Naive thymus-derived CD4-positive, alpha-beta T cell (primary cell): ENCODE measurements at regions of chr3 and their contacts with region 1.

Region 1: DNA sequence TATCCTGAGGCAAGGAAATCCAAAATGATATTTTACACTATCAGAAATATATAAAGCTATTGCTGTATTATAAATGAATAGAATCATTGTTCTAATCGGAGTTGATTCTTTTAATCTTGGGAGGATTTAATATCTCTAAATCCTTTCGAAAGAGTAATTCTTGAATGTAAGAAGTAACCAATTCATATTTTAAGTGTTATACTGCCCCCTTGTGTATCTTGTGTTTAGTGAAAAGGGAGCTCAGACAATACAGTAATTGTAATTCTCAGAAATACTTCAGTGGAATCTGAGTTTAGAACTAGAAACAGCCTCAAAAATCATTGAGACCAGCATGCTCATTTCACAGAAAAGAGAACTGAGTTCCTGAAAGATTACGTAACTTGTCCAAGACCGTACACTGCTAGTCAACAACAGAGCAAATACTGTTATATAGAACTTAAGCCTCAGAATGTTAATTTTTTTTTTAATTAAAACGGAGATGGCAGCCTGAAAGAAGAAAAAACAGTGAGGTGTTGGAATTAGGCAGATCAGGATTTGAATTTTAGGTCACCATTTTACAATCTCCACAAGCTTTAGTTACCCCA is 42.9 kb downstream of the PLCH1 start:
- DNase-seq: peak in 7 of 9 donors; percentile 13 to 58 (median 45)
- ATAC-seq: peak; percentile 69
- H3K4me3 ChIP-seq: no peak overlapping the region
- H3K4me3 Mint-ChIP-seq: no peak overlapping the region
- H3K27ac ChIP-seq: no peak overlapping the region
- H3K27ac Mint-ChIP-seq: no peak overlapping the region
- H3K4me1 ChIP-seq: no peaks in the 10 kb centered on the region
- H3K4me1 Mint-ChIP-seq: peaks cover 0 to 4% (median 0%) of the 10 kb centered on the region in 7 donors
- H3K27me3 ChIP-seq: no peaks in the 10 kb centered on the region
- H3K27me3 Mint-ChIP-seq: peaks cover 0 to 28% (median 6%) of the 10 kb centered on the region in 5 donors

Region 2: GRCh38 chr3:154040286-154040685 is 1661.7 kb before region 1 on chr3:
- CTCF ChIA-PET with region 1: no interaction called
- POLR2A ChIA-PET with region 1: no interaction called
- intact Hi-C with region 1: loop called in 1 of 2 experiments (anchors 2 kb)
- DNase-seq: no peak
- ATAC-seq: no peak
- H3K4me3 ChIP-seq: no peak overlapping the region
- H3K4me3 Mint-ChIP-seq: no peak overlapping the region
- H3K27ac ChIP-seq: no peak overlapping the region
- H3K27ac Mint-ChIP-seq: no peak overlapping the region
- H3K4me1 ChIP-seq: no peaks in the 10 kb centered on the region
- H3K4me1 Mint-ChIP-seq: no peaks in the 10 kb centered on the region
- H3K27me3 ChIP-seq: peaks cover 0 to 4% of the 10 kb centered on the region in 2 donors
- H3K27me3 Mint-ChIP-seq: peaks cover 2 to 22% (median 9%) of the 10 kb centered on the region in 5 donors

Region 3: DNA sequence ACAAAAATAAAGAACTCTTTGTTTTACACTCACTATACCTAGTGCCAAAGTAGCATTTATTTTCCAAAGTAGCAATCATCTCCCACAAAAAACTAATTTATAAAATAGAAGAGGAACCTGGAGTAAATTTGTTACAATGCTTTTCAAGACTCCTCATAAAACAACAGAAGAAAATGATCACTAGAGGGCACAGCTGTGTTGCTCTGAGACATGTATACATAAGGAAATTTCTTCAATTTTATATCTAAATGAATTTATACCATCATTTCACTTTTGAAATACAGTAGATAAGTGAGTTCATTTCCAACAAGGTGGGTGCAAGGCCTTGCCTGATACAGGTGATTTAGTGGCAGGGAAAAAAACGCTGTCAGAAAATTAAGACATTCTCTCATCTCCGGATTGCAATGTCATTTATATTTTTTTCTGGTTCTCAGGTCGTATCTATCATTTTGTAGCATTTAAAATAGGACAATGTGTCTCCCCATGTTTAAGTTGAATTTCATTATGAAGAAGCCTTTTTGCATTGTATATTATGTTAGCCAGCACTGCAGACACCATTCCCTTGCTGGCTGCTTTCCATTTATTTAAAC is 1606.0 kb before region 1 on chr3:
- CTCF ChIA-PET with region 1: no interaction called
- POLR2A ChIA-PET with region 1: no interaction called
- intact Hi-C with region 1: loop called in 1 of 2 experiments (anchors 2 kb)
- DNase-seq: no peak
- ATAC-seq: no peak
- H3K4me3 ChIP-seq: no peak overlapping the region
- H3K4me3 Mint-ChIP-seq: no peak overlapping the region
- H3K27ac ChIP-seq: no peak overlapping the region
- H3K27ac Mint-ChIP-seq: no peak overlapping the region
- H3K4me1 ChIP-seq: no peaks in the 10 kb centered on the region
- H3K4me1 Mint-ChIP-seq: no peaks in the 10 kb centered on the region
- H3K27me3 ChIP-seq: no peaks in the 10 kb centered on the region
- H3K27me3 Mint-ChIP-seq: peaks cover 0 to 12% (median 1%) of the 10 kb centered on the region in 5 donors

Region 4: DNA sequence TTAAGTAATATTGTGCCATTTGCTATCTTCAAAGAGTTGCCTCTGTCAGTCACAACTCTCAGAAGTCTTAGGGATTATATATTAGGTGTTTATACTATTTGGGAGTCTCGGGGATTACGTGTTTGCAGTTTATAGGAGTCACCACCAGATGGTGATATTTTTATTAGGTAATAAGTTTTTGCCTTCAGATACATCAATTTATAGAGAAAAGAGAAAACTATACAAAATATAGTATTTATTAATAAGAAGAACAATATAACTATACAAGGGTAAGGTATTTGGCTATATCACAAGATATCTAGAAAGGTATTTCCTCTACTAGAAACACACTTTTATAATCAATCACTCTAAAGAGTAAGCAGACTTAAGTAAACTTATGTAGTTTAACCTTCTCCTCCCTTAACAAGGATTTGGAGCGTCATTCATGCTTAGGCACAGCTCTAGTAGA is 1367.0 kb before region 1 on chr3:
- CTCF ChIA-PET with region 1: interaction called, 4 read pairs
- POLR2A ChIA-PET with region 1: no interaction called
- intact Hi-C with region 1: loop called (anchors 1 kb)
- DNase-seq: peak in 5 of 9 donors; percentile 22 to 35 (median 26)
- ATAC-seq: peak; percentile 70
- H3K4me3 ChIP-seq: no peak overlapping the region
- H3K4me3 Mint-ChIP-seq: no peak overlapping the region
- H3K27ac ChIP-seq: no peak overlapping the region
- H3K27ac Mint-ChIP-seq: no peak overlapping the region
- H3K4me1 ChIP-seq: no peaks in the 10 kb centered on the region
- H3K4me1 Mint-ChIP-seq: no peaks in the 10 kb centered on the region
- H3K27me3 ChIP-seq: no peaks in the 10 kb centered on the region
- H3K27me3 Mint-ChIP-seq: peaks cover 6 to 41% (median 7%) of the 10 kb centered on the region in 5 donors

Region 5: DNA sequence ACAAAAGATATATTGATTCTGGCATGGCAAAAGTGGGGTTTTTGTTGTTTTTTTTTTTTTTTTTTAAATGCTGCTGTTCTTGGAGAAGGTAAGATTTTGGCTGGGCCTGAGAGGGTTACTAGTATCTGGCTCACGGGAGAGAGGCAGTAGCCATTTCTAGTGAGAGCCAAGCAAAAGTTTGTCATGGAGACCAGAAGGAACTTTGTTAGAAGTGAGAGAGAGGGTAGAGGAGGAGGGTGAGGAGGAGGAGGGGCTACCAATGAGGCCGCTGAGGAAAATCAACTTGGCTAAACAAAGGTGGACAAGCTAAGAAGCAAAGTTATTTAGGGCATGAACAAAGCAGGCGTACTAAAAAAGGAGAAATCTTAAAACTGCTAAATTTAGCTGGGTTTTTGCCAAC is 359.6 kb before region 1 on chr3:
- CTCF ChIA-PET with region 1: no interaction called
- POLR2A ChIA-PET with region 1: no interaction called
- intact Hi-C with region 1: no loop called
- DNase-seq: no peak
- ATAC-seq: no peak
- H3K4me3 ChIP-seq: no peak overlapping the region
- H3K4me3 Mint-ChIP-seq: no peak overlapping the region
- H3K27ac ChIP-seq: no peak overlapping the region
- H3K27ac Mint-ChIP-seq: no peak overlapping the region
- H3K4me1 ChIP-seq: no peaks in the 10 kb centered on the region
- H3K4me1 Mint-ChIP-seq: no peaks in the 10 kb centered on the region
- H3K27me3 ChIP-seq: no peaks in the 10 kb centered on the region
- H3K27me3 Mint-ChIP-seq: peaks cover 0 to 11% (median 0%) of the 10 kb centered on the region in 5 donors

Region 6: DNA sequence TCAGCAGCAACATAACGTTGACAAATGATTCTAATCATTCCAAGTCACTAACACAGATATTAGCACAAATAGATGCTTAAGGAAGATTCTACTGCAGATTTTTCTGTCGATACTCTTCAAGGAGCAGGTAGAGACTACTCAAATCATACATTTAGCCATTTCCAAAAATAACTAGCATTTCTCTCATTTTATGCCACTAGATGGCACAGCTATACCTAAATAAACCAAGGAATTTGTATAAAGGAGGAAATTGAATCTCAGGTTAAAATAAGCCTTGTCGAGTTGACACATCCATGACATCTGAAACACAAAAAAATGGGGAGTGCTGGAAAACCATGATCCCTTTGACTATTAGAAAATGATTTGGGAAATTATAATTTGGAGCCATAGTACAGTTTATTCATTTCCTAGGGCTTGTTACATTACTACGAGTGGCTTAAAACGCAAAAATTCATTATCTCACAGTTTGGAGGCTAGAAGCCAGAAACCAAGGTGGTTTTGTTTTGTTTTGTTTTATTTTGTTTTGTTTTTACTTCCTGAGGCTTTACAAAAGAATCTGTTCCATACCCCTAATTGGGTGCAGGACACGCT is 349.0 kb before region 1 on chr3:
- CTCF ChIA-PET with region 1: interaction called, 8 read pairs
- POLR2A ChIA-PET with region 1: no interaction called
- intact Hi-C with region 1: loop called in 1 of 2 experiments (anchors 1 kb)
- DNase-seq: peak in 4 of 9 donors; percentile 16 to 38 (median 22)
- ATAC-seq: no peak
- H3K4me3 ChIP-seq: no peak overlapping the region
- H3K4me3 Mint-ChIP-seq: no peak overlapping the region
- H3K27ac ChIP-seq: no peak overlapping the region
- H3K27ac Mint-ChIP-seq: no peak overlapping the region
- H3K4me1 ChIP-seq: no peaks in the 10 kb centered on the region
- H3K4me1 Mint-ChIP-seq: no peaks in the 10 kb centered on the region
- H3K27me3 ChIP-seq: no peaks in the 10 kb centered on the region
- H3K27me3 Mint-ChIP-seq: peaks cover 0 to 26% (median 2%) of the 10 kb centered on the region in 5 donors

Region 7: DNA sequence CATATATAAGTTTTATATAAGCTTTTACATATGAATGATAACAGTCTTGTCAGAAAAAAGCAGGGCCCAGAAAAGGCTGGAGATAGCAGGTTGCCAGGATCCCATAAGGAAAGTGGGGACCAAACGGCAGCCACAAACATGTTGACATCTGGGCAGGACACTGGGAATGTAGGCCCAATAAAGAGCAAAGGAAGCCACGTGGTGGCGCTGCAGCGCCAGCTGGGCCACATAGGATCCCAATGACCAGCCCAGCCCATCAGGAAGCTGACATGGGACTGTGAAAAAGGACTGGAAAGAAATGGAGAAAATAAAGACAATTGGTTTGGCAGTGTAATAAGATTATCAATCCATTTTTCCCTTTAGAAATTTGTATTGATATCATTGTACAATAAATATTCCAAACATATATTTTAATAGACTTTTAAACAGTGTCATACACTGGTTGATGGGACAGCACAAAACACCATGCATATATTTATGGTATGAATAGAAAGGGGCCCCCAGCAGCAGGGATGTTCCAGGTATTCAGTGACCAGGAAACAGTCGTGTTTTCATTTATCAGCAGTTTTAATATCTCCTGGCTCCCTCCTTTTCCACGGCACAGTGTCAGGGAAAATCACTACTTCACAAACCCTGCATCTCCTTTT is 319.5 kb before region 1 on chr3:
- CTCF ChIA-PET with region 1: no interaction called
- POLR2A ChIA-PET with region 1: no interaction called
- intact Hi-C with region 1: loop called in 1 of 2 experiments (anchors 1 kb)
- DNase-seq: no peak
- ATAC-seq: no peak
- H3K4me3 ChIP-seq: no peak overlapping the region
- H3K4me3 Mint-ChIP-seq: no peak overlapping the region
- H3K27ac ChIP-seq: no peak overlapping the region
- H3K27ac Mint-ChIP-seq: no peak overlapping the region
- H3K4me1 ChIP-seq: no peaks in the 10 kb centered on the region
- H3K4me1 Mint-ChIP-seq: no peaks in the 10 kb centered on the region
- H3K27me3 ChIP-seq: no peaks in the 10 kb centered on the region
- H3K27me3 Mint-ChIP-seq: peaks cover 0 to 18% (median 4%) of the 10 kb centered on the region in 5 donors